Right cardiac atrium (tissue), 5 donors: ENCODE measurements at regions of chr17 and their contacts with region 1.

Region 1: GRCh38 chr17:49779739-49780231 is 8.7 kb upstream of the KAT7 start:
- DNase-seq: no peak
- ATAC-seq: peak; percentile 49 to 64
- H3K4me3 ChIP-seq: no peak overlapping the region
- H3K27ac ChIP-seq: no peak overlapping the region
- H3K4me1 ChIP-seq: peaks cover 5% of the 10 kb centered on the region
- H3K27me3 ChIP-seq: no peaks in the 10 kb centered on the region

Region 2: GRCh38 chr17:49575579-49576087 is 204.2 kb before region 1 on chr17 and contains the start of gene NXPH3:
- intact Hi-C with region 1: loop called in 3 of 4 experiments (anchors 5 to 10 kb)
- DNase-seq: peak; percentile 72 to 91 (median 89)
- ATAC-seq: peak; percentile 47 to 51
- H3K4me3 ChIP-seq: peak within 1 kb of the TSS; percentile 72
- H3K27ac ChIP-seq: peak within 1 kb of the TSS; percentile 66
- H3K4me1 ChIP-seq: peaks cover 5% of the 10 kb centered on the region
- H3K27me3 ChIP-seq: no peaks in the 10 kb centered on the region
- total RNA-seq, gene NXPH3: 3.8 to 6.5 (median 4.9) TPM

Region 3: DNA sequence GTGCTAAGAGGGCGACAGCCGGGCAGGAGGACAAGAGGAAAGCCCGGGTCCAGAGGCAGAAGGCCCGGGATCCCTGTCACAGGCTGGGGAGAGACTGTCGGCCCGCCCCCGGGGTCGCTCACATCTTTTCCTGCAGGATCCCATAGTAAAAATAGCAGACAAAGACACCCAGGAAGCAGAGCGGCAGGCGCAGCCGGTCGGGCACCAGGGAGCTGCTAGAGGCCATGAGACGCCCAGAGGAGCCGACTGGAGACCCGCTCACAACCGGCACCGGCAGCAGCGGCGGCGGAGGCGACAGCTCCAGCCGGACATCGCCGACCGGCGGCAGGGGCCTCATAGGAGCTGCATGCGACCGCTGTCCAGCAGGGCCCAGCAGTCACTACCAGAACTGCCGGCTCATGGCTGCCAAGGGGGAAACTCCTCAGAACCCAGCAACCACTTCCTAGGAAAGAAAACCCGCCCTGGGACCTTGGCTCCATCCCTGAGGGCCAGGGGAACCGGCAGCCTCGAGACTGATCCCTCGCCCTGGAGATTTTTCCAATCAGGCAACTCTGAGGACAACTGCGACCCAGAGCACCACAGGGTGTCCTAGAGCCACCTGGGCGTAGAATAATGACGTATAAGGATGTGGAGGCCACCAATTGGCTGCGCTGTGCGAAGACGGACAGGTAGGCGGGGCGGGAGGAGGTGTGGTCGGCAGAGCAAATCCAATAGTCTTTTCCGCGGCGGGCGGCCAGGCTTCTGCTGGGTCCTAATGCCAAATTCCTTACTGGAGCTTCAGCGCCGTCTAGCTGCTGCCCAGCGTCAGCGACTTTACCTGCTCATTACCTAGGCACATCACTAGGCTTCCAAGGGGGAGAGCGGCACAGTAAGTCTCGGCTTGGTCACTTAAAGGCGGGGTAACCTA is 71.9 kb before region 1 on chr17 and contains the start of gene SLC35B1:
- intact Hi-C with region 1: loop called in 3 of 4 experiments (anchors 2 to 5 kb)
- DNase-seq: peak; percentile 99 to 100 (median 100)
- ATAC-seq: peak; percentile 99
- H3K4me3 ChIP-seq: peak within 1 kb of the TSS; percentile 92
- H3K27ac ChIP-seq: peak within 1 kb of the TSS; percentile 96
- H3K4me1 ChIP-seq: peaks cover 3% of the 10 kb centered on the region
- H3K27me3 ChIP-seq: no peaks in the 10 kb centered on the region
- total RNA-seq, gene SLC35B1: 48.6 to 75.5 (median 56.2) TPM